ENCODE measurements at regions of chr11 and their contacts with region 1.

Region 1: GRCh38 chr11:46786110-46786509 is 60.0 kb downstream of the CKAP5 start:
- DNase-seq: no peak
- ATAC-seq: no peak
- H3K4me3 ChIP-seq: no peak overlapping the region
- H3K27ac ChIP-seq: no peak overlapping the region
- H3K4me1 ChIP-seq: no peaks in the 10 kb centered on the region
- H3K27me3 ChIP-seq: no peaks in the 10 kb centered on the region
- CTCF ChIP-seq: no peak
- POLR2A ChIP-seq: no peak

Region 2: GRCh38 chr11:46547579-46547978 is 238.5 kb before region 1 on chr11:
- intact Hi-C with region 1: loop called in 1 of 10 experiments (anchors 5 kb)
- DNase-seq: no peak
- ATAC-seq: no peak
- H3K4me3 ChIP-seq: no peak overlapping the region
- H3K27ac ChIP-seq: no peak overlapping the region
- H3K4me1 ChIP-seq: peaks cover 0 to 9% (median 0%) of the 10 kb centered on the region in 12 donors
- H3K27me3 ChIP-seq: no peaks in the 10 kb centered on the region
- CTCF ChIP-seq: no peak
- POLR2A ChIP-seq: no peak